PC-3 (cell line): ENCODE measurements at regions of chr13 and their contacts with region 1.

Region 1: DNA sequence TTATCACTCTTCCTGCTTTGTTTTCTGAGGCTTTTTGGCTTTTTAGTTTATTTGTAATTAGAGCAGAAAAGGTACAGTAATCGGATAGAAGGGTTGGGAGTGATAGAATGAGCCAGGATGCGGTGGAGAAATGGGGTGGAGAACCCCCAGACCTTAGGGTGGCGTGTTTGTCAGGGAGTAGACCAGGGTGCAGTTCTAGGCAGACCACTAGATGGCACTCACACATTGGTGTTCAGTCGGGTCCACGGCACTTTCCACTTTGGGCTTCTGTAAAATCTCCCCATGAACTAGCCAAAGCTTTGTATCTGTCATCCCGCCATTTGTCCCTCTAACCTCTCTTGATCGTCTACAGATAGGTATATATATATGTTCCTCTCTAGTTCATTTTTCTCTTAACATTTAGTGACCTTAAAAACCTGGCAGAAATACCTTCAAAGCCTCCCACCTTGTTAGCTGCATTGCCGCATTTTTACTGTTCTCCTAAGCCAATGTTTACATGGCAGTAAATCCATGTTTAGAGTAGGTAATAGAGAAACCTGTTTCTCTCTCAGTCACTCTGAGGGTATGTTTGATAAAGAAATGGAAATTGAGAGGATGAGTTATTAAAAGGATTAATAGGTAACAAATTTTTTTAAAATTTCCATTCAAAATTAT is 154.9 kb downstream of the TM9SF2 start:
- DNase-seq: peak; percentile 72
- ATAC-seq: peak; percentile 87
- H3K4me3 ChIP-seq: peak overlapping the region; percentile 27; the same call in 1 of the 2 replicates
- H3K27ac ChIP-seq: no peak overlapping the region
- H3K4me1 ChIP-seq: no peaks in the 10 kb centered on the region
- H3K27me3 ChIP-seq: no peaks in the 10 kb centered on the region
- CTCF ChIP-seq: peak; percentile 85

Region 2: GRCh38 chr13:99916366-99917103 is 260.3 kb after region 1 on chr13:
- CTCF ChIA-PET with region 1: interaction called, 3 read pairs
- POLR2A ChIA-PET with region 1: no interaction called
- intact Hi-C with region 1: loop called (anchors 5 kb)
- DNase-seq: peak; percentile 69
- ATAC-seq: peak; percentile 88
- H3K4me3 ChIP-seq: no peak overlapping the region
- H3K27ac ChIP-seq: no peak overlapping the region
- H3K4me1 ChIP-seq: no peaks in the 10 kb centered on the region
- H3K27me3 ChIP-seq: peaks cover 22% of the 10 kb centered on the region
- CTCF ChIP-seq: peak; percentile 95

Region 3: DNA sequence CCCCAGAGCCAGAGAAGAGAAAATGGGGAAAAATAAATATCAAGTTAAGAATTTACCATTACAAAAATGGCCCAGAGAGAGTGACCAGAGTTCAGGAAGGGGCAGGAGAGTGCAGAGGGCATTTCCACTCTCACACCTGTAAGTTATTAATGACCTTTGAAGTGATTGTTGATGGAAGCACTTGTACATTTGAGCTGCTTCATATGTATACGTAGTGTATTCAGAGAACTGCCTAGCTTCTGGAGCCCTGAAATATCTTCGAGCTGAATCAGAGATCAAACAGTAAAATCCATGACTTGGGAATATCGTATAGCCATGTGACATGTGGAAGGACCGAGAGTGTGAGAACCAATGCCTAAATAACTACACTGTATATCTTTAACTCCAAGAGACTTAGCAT is 383.5 kb after region 1 on chr13:
- CTCF ChIA-PET with region 1: no interaction called
- POLR2A ChIA-PET with region 1: no interaction called
- intact Hi-C with region 1: loop called (anchors 5 kb)
- DNase-seq: peak; percentile 53
- ATAC-seq: peak; percentile 64
- H3K4me3 ChIP-seq: peak overlapping the region; percentile 30; the same call in 1 of the 2 replicates
- H3K27ac ChIP-seq: no peak overlapping the region
- H3K4me1 ChIP-seq: peaks cover 9% of the 10 kb centered on the region; the same call in 1 of the 2 replicates
- H3K27me3 ChIP-seq: no peaks in the 10 kb centered on the region
- CTCF ChIP-seq: no peak

Region 4: DNA sequence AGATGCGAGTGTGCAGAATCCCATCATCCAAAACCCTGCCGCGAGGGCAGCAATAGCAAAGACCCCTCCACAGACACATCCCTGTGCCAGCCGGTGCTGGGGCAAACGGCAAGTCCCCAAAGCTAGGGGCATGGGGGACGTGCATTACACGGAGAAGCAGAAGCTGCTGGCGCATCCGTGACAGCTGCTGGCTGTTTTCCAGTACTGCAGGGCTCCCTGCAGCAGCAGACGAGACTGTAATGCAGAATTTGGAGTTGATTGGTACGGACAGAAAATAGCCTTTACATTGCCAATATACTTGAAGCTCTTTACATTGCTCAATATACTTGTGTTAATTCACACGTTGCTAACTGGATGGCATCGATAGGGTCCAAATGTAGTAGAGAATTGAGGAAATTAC is 1095.6 kb after region 1 on chr13:
- CTCF ChIA-PET with region 1: no interaction called
- POLR2A ChIA-PET with region 1: no interaction called
- intact Hi-C with region 1: no loop called
- DNase-seq: no peak
- ATAC-seq: no peak
- H3K4me3 ChIP-seq: no peak overlapping the region
- H3K27ac ChIP-seq: no peak overlapping the region
- H3K4me1 ChIP-seq: no peaks in the 10 kb centered on the region
- H3K27me3 ChIP-seq: peaks cover 36% of the 10 kb centered on the region
- CTCF ChIP-seq: no peak